WTC11 (cell line): ENCODE measurements at regions of chr2 and their contacts with region 1.

Region 1: DNA sequence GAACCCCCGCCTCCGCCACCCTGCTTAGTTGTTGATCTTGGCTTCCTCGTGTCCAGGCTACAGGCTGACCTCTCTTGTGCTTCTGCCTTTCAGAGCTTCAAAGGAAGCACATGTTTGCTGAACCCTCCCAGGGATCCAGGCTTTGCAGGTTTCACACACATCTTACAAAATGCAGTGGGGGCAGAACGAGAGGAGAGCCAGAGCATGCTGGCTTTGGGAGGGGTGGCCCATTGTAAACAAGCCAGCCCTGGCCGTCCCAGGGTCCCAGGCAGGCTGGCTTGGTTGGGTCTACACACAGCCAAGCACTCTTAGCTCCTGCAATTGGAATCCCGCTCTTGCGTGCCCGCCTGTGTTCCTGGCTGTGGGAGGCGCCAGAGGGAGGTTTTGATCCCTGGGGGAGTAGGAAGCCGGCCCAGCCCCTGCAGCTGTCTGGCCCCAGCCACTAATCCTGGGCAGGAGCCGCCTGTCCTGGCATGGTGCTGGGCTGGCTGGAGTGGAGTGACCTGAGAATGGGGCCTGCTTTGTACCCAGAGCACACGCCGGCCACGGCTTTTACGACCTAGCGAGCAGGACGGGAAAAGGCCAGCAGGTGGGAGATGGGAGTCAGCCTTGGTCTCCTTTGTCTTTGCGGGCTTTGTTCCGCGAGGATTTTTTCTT is 53.9 kb downstream of the SH3BP4 start:
- DNase-seq: peak; percentile 79
- ATAC-seq: peak; percentile 89
- H3K4me3 Mint-ChIP-seq: peak overlapping the region; percentile 8; the same call in 1 of the 2 replicates
- H3K27ac Mint-ChIP-seq: peak overlapping the region; percentile 98
- H3K4me1 Mint-ChIP-seq: peaks cover 67% of the 10 kb centered on the region
- H3K27me3 Mint-ChIP-seq: no peaks in the 10 kb centered on the region
- CTCF ChIP-seq: peak; percentile 18; the same call in 1 of the 2 replicates

Region 2: DNA sequence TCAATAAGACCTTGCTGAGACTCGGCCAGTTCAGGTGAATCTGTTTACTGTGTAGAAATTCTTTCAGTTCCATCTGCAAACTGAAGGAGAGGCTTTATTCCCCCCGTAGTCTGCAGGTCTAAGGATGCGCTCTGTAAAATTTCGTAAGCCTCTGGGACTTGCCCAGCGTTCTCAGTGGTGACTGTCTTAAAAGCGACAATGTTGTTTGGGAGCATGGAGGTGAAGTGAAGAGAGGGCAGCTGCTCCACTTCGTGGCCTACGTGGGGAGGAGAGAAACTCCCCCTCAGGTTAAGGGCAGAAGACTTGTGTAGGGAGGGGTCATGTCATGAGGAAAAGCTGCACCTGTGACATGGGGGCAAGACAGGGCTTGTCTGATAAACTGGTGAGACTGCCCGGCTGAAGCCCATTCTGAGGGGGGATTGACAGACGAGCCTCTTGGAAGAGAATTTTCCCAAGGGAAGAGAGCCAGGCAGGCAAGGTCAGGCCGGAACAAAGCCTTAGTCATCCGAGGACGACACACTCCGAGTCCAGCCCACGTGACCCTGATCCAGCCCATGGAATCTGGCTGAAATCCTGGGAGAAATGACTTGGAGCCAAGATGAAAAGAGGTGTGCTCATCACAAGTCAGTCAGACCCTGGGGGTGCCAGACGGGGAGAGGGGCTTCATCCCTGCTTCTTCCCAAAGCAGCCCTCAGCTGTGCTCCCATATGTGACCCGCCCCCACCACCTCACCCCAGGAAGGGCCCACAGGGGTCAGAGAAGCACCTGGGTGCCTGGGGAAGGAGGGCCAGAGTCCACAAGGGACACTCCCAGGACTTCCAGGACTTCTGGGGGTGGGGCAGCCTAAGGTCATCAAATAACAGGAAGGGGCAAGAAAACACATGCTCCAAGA is 142.4 kb before region 1 on chr2:
- CTCF ChIA-PET with region 1: no interaction called
- POLR2A ChIA-PET with region 1: no interaction called
- DNase-seq: no peak
- ATAC-seq: no peak; the same call in 1 of the 2 replicates
- H3K4me3 Mint-ChIP-seq: no peak overlapping the region
- H3K27ac Mint-ChIP-seq: peak overlapping the region; percentile 52
- H3K4me1 Mint-ChIP-seq: peaks cover 28% of the 10 kb centered on the region
- H3K27me3 Mint-ChIP-seq: peaks cover 3% of the 10 kb centered on the region
- CTCF ChIP-seq: no peak

Region 3: DNA sequence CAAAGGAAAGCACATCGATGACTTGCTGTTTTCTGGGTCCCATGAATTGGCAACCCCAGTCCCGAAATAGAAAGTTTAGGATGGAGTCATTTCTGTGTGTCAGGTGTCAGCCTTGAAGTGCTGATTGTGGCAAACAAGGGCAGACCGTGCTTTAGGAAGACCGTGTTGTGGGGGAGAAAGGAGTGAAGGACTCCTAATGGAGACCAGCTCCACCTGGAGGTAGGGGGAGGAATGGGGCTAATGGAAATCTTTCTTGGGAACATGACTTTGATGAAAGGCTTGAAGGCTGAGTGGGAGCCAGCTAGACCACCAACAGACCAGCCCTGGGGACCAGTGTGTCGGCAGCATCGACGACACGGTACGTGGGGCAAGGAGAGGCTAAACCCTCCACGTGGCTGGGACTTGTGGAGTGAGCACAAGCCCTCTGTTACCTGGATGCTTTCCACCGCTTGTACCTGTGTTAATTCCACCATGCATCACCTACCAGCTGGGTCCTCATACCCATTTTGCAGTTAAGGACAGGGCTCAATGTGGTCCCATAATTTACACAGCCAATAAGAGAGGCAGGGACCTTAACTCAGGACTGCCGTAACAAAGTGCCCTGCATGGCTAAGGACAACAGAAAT is 50.3 kb after region 1 on chr2:
- CTCF ChIA-PET with region 1: interaction called, 14 read pairs
- POLR2A ChIA-PET with region 1: no interaction called
- DNase-seq: peak; percentile 52
- ATAC-seq: peak; percentile 85
- H3K4me3 Mint-ChIP-seq: no peak overlapping the region
- H3K27ac Mint-ChIP-seq: no peak overlapping the region
- H3K4me1 Mint-ChIP-seq: peaks cover 4% of the 10 kb centered on the region
- H3K27me3 Mint-ChIP-seq: no peaks in the 10 kb centered on the region
- CTCF ChIP-seq: peak; percentile 54

Region 4: DNA sequence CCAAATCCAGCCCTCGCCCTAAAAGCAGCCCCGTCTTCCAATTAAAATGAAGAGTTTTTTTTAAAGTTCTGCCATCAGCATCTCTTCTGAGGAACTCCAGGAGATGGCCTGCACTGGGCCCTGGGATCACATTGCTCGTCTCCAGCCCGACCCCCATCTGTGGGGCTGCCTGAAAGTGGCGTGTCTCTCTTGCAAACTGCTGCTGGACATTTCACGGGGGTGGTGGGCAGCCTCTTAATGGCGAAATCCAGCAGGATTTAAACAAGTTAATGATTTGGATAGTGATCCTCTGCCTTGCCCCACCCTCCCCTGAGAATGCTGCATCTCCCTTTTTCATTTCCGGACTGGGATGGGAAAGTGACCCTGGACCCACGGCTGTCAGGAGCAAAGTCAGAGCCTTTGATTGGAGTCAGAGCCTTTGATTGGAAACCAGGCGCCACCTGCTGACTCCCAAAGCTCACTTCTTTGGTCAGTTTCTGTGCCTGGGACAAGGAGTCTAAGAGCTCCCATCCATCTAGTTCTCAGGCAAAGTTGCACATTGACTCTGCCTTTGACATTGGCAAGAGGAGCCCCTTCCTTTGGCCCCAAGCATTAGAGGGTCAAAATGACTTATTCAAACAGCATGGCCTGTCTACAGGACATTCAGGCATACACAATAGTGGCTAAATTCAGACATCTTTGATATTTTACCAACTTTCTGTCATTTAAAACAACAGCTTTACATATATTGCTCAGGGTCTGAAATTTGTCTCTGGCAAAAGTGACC is 101.3 kb after region 1 on chr2:
- CTCF ChIA-PET with region 1: interaction called, 32 read pairs
- POLR2A ChIA-PET with region 1: no interaction called
- DNase-seq: peak; percentile 69
- ATAC-seq: peak; percentile 76
- H3K4me3 Mint-ChIP-seq: no peak overlapping the region
- H3K27ac Mint-ChIP-seq: no peak overlapping the region
- H3K4me1 Mint-ChIP-seq: peaks cover 8% of the 10 kb centered on the region
- H3K27me3 Mint-ChIP-seq: no peaks in the 10 kb centered on the region
- CTCF ChIP-seq: no peak